ENCODE measurements at regions of chr22 and their contacts with region 1.

Region 1: GRCh38 chr22:36977947-36978660 is 41.1 kb downstream of the TST start:
- DNase-seq: peak; percentile 59 to 88
- H3K4me3 ChIP-seq: peak overlapping the region in 3 of 4 experiments; percentile 29 to 65 (median 33); a peak in 5 of 8 replicates
- H3K27ac ChIP-seq: no peak overlapping the region
- H3K4me1 ChIP-seq: no peaks in the 10 kb centered on the region; a peak in 1 of 7 replicates
- H3K27me3 ChIP-seq: no peaks in the 10 kb centered on the region; a peak in 2 of 7 replicates
- CTCF ChIP-seq: peak; percentile 92 to 93 (median 93)
- EP300 ChIP-seq: no peak; a peak in 1 of 3 replicates
- POLR2A ChIP-seq: no peak
- RAD21 ChIP-seq: peak; percentile 90

Region 2: DNA sequence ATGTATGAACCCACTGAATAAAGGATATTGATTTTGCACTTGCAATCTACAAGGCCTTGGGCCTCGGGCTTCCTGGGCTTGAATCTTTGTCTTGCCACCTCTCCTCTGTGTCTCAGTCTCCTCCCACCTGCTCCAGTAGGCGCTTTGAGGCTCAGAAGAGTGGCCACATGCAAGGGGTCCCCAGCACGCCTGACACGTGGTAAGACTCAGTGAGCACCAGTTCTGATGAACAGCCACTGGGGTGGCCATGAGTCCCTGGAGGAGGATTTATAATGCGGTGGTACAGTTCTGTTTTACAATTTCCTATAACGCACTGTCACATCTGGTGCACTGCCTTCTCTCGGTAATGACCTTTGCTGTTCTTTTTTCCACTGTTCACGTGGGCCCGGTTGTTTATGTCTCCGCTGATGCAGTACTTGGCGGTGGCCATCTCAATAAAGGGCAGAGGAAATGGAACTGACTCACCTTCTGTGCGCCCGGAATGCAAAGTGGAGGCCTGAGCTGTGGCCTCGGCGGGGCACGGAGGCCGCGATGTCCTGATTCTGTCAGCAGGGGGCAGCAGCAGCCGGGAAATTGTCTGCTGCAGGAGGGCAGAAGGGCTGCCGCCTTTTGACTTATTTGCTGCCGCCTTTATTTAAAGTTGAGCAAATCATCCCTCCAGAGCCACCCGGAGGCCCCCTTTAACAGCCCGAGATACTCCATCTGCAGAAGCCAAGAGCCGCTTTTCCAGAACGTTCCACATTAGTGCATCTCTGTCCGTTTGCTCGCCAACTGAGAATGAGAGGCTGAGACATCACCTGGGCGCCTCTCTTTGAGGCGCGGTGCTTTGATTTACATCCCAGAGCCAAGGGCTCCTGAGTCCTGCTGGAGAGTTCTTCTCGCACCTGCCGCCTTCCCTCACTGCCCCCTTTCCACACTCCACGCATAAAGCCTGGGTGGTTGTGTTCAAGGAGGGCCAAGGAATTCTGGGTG is 196.2 kb before region 1 on chr22:
- CTCF ChIA-PET with region 1: interaction called, 11 read pairs
- POLR2A ChIA-PET with region 1: no interaction called
- DNase-seq: peak; percentile 73 to 97
- H3K4me3 ChIP-seq: peak overlapping the region in 1 of 4 experiments; percentile 14; a peak in 2 of 8 replicates
- H3K27ac ChIP-seq: no peak overlapping the region
- H3K4me1 ChIP-seq: peaks cover under 1 to 6% (median 3%) of the 10 kb centered on the region in 4 experiments; a peak in 5 of 7 replicates
- H3K27me3 ChIP-seq: peaks cover 0 to 8% (median 7%) of the 10 kb centered on the region in 4 experiments; a peak in 4 of 7 replicates
- CTCF ChIP-seq: peak; percentile 89 to 97 (median 93)
- EP300 ChIP-seq: peak in 1 of 2 experiments; percentile 12; a peak in 1 of 3 replicates
- POLR2A ChIP-seq: no peak
- RAD21 ChIP-seq: peak; percentile 93 to 96

Region 3: DNA sequence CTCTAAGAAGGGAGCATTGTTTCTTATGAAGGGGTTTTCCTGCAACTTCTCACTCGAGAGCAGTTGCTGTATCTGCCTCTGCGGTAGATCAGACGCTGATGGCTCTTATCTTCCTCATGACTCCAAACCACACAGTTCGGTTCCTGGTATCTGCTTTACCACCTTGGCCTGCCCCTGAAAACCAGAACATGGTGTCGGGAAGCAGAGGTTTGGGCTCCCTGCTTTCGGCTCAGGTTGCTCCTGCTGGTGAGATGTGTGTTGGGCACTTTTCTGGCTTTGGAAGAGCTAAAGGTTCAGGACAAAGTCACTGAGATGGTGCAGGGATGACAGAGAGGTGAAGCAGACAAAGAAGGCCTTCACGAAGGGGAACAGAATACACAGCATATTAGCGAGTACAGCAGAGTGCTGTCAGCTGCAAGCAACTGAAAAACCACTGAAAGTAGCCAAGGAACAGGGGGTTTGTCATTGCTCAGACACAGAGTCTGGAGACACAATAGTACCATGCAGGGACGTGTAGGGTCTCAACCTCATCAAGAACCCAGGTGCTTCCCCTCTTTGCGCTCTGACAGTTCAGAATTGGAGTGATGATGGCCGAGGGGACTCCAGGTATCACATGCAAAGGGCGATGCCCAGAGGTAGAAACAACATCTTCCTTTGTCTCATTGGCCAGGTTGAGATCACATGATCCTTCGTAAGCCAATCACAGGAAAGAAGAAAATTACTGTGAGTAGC is 76.5 kb before region 1 on chr22:
- CTCF ChIA-PET with region 1: interaction called, 16 read pairs
- POLR2A ChIA-PET with region 1: interaction called, 4 read pairs
- DNase-seq: no peak
- H3K4me3 ChIP-seq: no peak overlapping the region
- H3K27ac ChIP-seq: 0 out of 2 replicates have a peak overlapping the region, but pooled peaks have one; percentile 6
- H3K4me1 ChIP-seq: peaks cover 11 to 17% (median 13%) of the 10 kb centered on the region in 4 experiments
- H3K27me3 ChIP-seq: peaks cover 0 to 6% (median 2%) of the 10 kb centered on the region in 4 experiments; a peak in 2 of 7 replicates
- CTCF ChIP-seq: no peak
- EP300 ChIP-seq: no peak
- POLR2A ChIP-seq: no peak
- RAD21 ChIP-seq: no peak

Region 4: GRCh38 chr22:36955701-36956100 is 22.4 kb before region 1 on chr22:
- CTCF ChIA-PET with region 1: interaction called, 19 read pairs
- POLR2A ChIA-PET with region 1: interaction called, 3 read pairs
- DNase-seq: no peak
- H3K4me3 ChIP-seq: no peak overlapping the region
- H3K27ac ChIP-seq: no peak overlapping the region
- H3K4me1 ChIP-seq: no peaks in the 10 kb centered on the region
- H3K27me3 ChIP-seq: no peaks in the 10 kb centered on the region
- CTCF ChIP-seq: no peak
- EP300 ChIP-seq: no peak
- POLR2A ChIP-seq: no peak
- RAD21 ChIP-seq: no peak

Region 5: GRCh38 chr22:36966851-36967540 is 11.1 kb before region 1 on chr22:
- CTCF ChIA-PET with region 1: interaction called, 68 read pairs
- POLR2A ChIA-PET with region 1: interaction called, 4 read pairs
- DNase-seq: no peak
- H3K4me3 ChIP-seq: no peak overlapping the region
- H3K27ac ChIP-seq: no peak overlapping the region
- H3K4me1 ChIP-seq: no peaks in the 10 kb centered on the region
- H3K27me3 ChIP-seq: no peaks in the 10 kb centered on the region; a peak in 1 of 7 replicates
- CTCF ChIP-seq: no peak
- EP300 ChIP-seq: no peak
- POLR2A ChIP-seq: no peak
- RAD21 ChIP-seq: no peak

Region 6: GRCh38 chr22:37019309-37020125 is 41.4 kb after region 1 on chr22 and contains the starts of genes MPST and TST:
- CTCF ChIA-PET with region 1: interaction called, 10 read pairs
- POLR2A ChIA-PET with region 1: interaction called, 4 read pairs
- DNase-seq: peak in 1 of 2 experiments; percentile 79
- H3K4me3 ChIP-seq: peak within 1 kb of the TSS; percentile 70 to 86 (median 78)
- H3K27ac ChIP-seq: peak within 1 kb of the TSS; percentile 89; the same call in 1 of the 2 replicates
- H3K4me1 ChIP-seq: peaks cover 0 to 21% (median 11%) of the 10 kb centered on the region in 4 experiments; a peak in 6 of 7 replicates
- H3K27me3 ChIP-seq: no peaks in the 10 kb centered on the region
- CTCF ChIP-seq: no peak; a peak in 1 of 4 replicates
- EP300 ChIP-seq: peak in 1 of 2 experiments; percentile 83; a peak in 2 of 3 replicates
- POLR2A ChIP-seq: peak in 1 of 2 experiments; percentile 76; a peak in 2 of 3 replicates
- RAD21 ChIP-seq: no peak
- total RNA-seq, gene MPST: 86.0 and 89.9 TPM in 2 replicates
- total RNA-seq, gene TST: 22.6 and 23.6 TPM in 2 replicates

Region 7: DNA sequence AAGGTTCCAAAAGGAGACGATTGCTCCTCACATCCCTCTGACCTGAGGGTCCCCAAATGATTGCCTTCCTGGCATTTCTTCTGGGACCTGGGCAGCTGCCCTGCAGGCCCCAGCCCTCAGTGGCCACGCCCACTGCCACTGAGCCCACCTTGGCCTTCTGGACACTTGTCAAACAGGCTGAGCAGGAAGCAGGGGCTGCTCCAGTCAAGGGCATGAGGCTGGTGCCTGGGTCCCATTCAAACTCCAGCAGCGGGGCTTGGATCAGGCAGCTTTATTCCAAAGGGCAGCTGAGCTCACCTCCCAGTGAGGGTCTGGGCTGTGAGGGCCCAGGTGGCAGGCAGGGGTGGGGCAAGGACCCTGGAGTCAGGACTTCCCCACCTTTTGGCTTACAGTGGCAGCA is 87.1 kb after region 1 on chr22:
- CTCF ChIA-PET with region 1: no interaction called
- POLR2A ChIA-PET with region 1: no interaction called
- DNase-seq: no peak
- H3K4me3 ChIP-seq: no peak overlapping the region
- H3K27ac ChIP-seq: no peak overlapping the region
- H3K4me1 ChIP-seq: peaks cover 3 to 27% (median 16%) of the 10 kb centered on the region in 4 experiments
- H3K27me3 ChIP-seq: peaks cover 8 to 45% (median 39%) of the 10 kb centered on the region in 4 experiments
- CTCF ChIP-seq: no peak
- EP300 ChIP-seq: no peak
- POLR2A ChIP-seq: no peak
- RAD21 ChIP-seq: no peak

Region 8: GRCh38 chr22:37370306-37370979 is 392.3 kb after region 1 on chr22:
- CTCF ChIA-PET with region 1: no interaction called
- POLR2A ChIA-PET with region 1: no interaction called
- DNase-seq: no peak
- H3K4me3 ChIP-seq: no peak overlapping the region
- H3K27ac ChIP-seq: no peak overlapping the region
- H3K4me1 ChIP-seq: peaks cover 0 to 11% (median 7%) of the 10 kb centered on the region in 4 experiments; a peak in 5 of 7 replicates
- H3K27me3 ChIP-seq: no peaks in the 10 kb centered on the region; a peak in 1 of 7 replicates
- CTCF ChIP-seq: no peak
- EP300 ChIP-seq: no peak
- POLR2A ChIP-seq: no peak
- RAD21 ChIP-seq: no peak

Measured in H1 (cell line).